ENCODE measurements at regions of chr20 and their contacts with region 1.

Region 1: GRCh38 chr20:53738039-53738944 is 144.7 kb upstream of the ZNF217 start:
- DNase-seq: peak; percentile 85 to 97
- H3K4me3 ChIP-seq: peak overlapping the region; percentile 62
- H3K27ac ChIP-seq: peak overlapping the region; percentile 98
- H3K4me1 ChIP-seq: peaks cover 89% of the 10 kb centered on the region
- H3K27me3 ChIP-seq: no peaks in the 10 kb centered on the region
- CTCF ChIP-seq: no peak

Region 2: DNA sequence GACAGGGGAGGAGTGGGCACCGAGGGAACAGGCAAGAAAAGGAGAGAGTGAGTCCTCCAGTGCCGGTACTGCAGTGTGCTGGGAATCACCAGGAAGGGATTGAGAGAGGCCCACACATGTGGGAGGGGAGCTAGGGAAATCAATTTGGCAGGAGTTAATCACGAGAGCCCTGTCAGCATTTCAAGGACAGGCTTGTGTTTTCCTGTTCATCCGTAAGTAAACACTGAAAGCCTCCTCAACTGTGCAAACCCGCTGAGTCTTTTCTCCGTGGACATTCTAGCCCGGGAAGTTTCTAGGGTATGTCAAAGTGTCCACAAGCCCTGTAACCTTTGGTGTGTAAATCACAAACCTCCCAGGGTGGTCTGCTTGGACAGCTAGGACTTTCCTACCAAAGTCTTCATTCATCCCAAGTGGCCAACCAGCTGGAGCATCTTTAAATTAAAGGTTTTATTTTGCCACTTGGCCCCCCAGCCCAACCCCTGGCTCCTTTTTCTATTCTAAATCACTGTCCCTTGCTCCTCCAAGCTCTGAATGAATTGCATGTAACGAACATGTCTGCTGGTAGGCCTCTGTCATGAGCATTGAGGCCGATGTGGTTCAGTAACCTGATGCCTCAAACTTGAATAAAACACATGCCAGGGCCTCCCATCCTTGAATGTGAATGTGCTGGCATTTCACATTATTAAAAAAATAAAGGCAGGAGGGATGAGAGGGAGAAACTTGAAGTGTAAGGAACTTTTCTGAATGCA is 293.7 kb before region 1 on chr20:
- CTCF ChIA-PET with region 1: no interaction called
- POLR2A ChIA-PET with region 1: no interaction called
- intact Hi-C with region 1: no loop called
- DNase-seq: no peak
- H3K4me3 ChIP-seq: no peak overlapping the region
- H3K27ac ChIP-seq: no peak overlapping the region
- H3K4me1 ChIP-seq: no peaks in the 10 kb centered on the region
- H3K27me3 ChIP-seq: peaks cover 67% of the 10 kb centered on the region
- CTCF ChIP-seq: no peak

Region 3: GRCh38 chr20:53594068-53595017 is 143.9 kb before region 1 on chr20:
- CTCF ChIA-PET with region 1: no interaction called
- POLR2A ChIA-PET with region 1: interaction called, 11 read pairs
- intact Hi-C with region 1: loop called (anchors 2 kb)
- DNase-seq: peak; percentile 73 to 98
- H3K4me3 ChIP-seq: peak overlapping the region; percentile 99
- H3K27ac ChIP-seq: peak overlapping the region; percentile 98
- H3K4me1 ChIP-seq: peaks cover 59% of the 10 kb centered on the region
- H3K27me3 ChIP-seq: no peaks in the 10 kb centered on the region
- CTCF ChIP-seq: no peak; the same call in 1 of the 2 replicates

Region 4: GRCh38 chr20:53664113-53664850 is 74.0 kb before region 1 on chr20:
- CTCF ChIA-PET with region 1: no interaction called
- POLR2A ChIA-PET with region 1: interaction called, 13 read pairs
- intact Hi-C with region 1: no loop called
- DNase-seq: no peak
- H3K4me3 ChIP-seq: no peak overlapping the region
- H3K27ac ChIP-seq: no peak overlapping the region
- H3K4me1 ChIP-seq: 0 out of 2 replicates have a peak, but pooled peaks cover 3% of the 10 kb centered on the region
- H3K27me3 ChIP-seq: no peaks in the 10 kb centered on the region
- CTCF ChIP-seq: no peak

Region 5: GRCh38 chr20:53773792-53774401 is 35.6 kb after region 1 on chr20:
- CTCF ChIA-PET with region 1: no interaction called
- POLR2A ChIA-PET with region 1: interaction called, 14 read pairs
- intact Hi-C with region 1: loop called (anchors 1 kb)
- DNase-seq: peak; percentile 37 to 99
- H3K4me3 ChIP-seq: no peak overlapping the region
- H3K27ac ChIP-seq: peak overlapping the region; percentile 93
- H3K4me1 ChIP-seq: peaks cover 41% of the 10 kb centered on the region
- H3K27me3 ChIP-seq: no peaks in the 10 kb centered on the region
- CTCF ChIP-seq: no peak

Region 6: DNA sequence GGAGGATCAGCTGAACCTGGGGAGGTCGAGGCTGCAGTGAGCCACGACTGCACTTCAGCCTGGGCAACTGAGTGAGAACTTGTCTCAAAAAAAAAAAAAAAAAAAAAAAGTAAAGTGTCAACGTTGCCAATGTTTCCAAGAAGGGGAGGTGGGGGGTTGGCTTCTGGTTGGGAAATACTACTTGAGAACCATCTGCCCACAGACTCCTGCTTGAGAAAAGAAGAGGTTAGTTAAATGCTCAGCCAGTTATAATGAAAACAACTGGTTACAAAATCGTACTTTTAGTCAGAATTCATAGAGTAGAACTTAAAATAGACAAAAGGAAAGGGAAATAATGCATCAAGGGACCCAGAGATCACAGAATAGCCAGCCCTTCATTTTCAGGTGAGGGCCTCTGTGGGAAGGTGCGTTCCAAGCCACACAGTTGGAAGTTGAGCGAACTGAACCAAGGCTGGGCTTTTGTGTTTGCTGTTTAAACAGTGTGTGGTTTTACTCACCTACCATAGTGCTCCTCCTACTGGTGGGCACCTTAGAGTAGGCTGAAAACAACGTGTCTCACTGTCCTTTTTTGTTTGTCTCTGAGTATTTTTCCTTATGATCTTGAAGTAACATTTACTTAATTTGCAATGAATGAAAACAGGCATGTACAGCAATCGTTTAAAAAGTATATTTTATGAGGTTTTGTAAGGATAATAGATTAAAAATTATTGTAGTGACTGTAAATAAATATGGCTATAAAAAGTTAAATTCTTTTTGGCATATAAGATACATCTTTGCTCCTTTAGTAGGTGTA is 131.4 kb after region 1 on chr20:
- CTCF ChIA-PET with region 1: no interaction called
- POLR2A ChIA-PET with region 1: interaction called, 8 read pairs
- intact Hi-C with region 1: loop called (anchors 5 kb)
- DNase-seq: peak; percentile 64 to 76
- H3K4me3 ChIP-seq: no peak overlapping the region
- H3K27ac ChIP-seq: peak overlapping the region; percentile 77
- H3K4me1 ChIP-seq: peaks cover 68% of the 10 kb centered on the region
- H3K27me3 ChIP-seq: no peaks in the 10 kb centered on the region
- CTCF ChIP-seq: peak; percentile 90

Region 7: GRCh38 chr20:54062812-54063280 is 324.6 kb after region 1 on chr20:
- CTCF ChIA-PET with region 1: no interaction called
- POLR2A ChIA-PET with region 1: no interaction called
- intact Hi-C with region 1: loop called (anchors 10 kb)
- DNase-seq: peak in 1 of 2 experiments; percentile 60
- H3K4me3 ChIP-seq: no peak overlapping the region
- H3K27ac ChIP-seq: no peak overlapping the region
- H3K4me1 ChIP-seq: peaks cover 13% of the 10 kb centered on the region
- H3K27me3 ChIP-seq: no peaks in the 10 kb centered on the region
- CTCF ChIP-seq: peak; percentile 79

Measured in PC-9 (cell line).